Aorta (tissue), 5 donors: ENCODE measurements at regions of chr6 and their contacts with region 1.

Region 1: DNA sequence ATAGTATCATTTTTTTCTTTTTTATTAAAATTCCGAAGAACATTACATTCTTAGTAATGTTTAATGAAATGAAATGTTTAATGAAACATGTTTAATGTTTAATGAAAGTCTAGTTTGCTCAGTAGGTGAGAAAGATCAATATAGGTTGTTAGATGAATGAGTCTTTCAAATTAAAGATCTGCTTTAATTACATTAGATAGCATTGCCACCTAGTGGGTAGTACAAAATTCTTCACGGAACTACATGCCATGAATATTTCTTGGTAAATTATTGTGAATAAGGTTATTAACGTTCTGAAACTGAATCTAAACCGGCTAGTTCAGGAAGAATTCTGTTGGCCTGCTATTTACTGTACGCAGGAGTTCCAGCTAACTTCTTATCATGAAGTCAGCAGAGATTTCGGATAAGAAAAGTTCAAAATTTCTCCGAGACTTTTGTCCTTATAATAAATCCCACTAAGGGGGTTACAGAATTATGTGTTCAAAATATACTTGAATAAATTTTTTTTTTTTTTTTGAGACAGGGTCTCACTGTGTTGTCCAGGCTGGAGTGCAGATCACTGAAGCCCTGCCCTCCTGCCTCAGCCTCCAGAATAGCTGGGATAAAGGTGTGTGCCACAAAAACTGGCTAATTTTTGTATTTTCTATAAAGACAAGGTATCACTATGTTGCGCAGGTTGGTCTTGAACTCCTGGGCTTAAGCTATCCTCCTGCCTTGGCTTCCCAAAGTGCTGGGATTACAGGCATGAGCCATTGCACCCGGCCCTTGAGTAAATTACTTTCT is 7.9 kb upstream of the GMNN start:
- DNase-seq: no peak
- ATAC-seq: no peak
- H3K4me3 ChIP-seq: no peak overlapping the region
- H3K27ac ChIP-seq: no peak overlapping the region
- H3K4me1 ChIP-seq: no peaks in the 10 kb centered on the region
- H3K27me3 ChIP-seq: no peaks in the 10 kb centered on the region

Region 2: DNA sequence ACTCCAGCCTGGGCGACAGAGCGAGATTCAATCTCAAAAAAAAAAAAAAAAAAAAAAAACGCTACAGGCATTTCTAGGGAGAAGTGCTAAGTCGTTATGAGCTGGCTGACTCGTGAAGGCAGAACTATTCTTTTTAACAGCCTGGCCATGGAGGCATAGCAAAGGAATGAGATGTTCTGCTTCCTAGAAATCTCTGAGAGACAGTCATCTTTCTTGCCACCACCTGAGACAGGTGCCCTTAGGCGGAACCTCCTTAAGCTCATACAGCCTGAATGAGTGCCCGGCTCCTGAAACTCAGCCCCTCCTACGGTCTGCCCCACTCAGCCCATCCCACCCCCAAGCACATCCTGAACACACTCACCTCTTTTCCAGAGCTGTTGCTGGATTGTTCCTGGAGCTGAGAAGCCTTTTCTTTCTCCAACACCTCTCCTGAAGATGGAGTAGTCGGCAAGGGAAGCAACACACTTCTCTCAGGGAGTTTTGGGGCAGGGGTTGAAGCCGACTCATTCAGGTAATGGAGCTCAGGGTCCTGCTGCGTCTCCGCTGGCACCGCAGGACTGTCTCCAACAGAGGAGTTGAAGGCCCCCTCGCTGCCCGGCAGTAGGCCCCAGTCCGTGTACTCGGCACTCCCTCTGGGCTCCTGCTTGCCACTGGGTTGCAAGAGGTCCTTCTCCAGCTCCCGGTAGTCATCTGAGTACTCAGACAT is 171.2 kb before region 1 on chr6:
- intact Hi-C with region 1: no loop called
- DNase-seq: no peak
- ATAC-seq: no peak
- H3K4me3 ChIP-seq: no peak overlapping the region
- H3K27ac ChIP-seq: no peak overlapping the region
- H3K4me1 ChIP-seq: no peaks in the 10 kb centered on the region
- H3K27me3 ChIP-seq: no peaks in the 10 kb centered on the region

Region 3: GRCh38 chr6:24666641-24667377 is 100.1 kb before region 1 on chr6 and contains the starts of genes ACOT13 and TDP2:
- intact Hi-C with region 1: loop called in 1 of 2 experiments (anchors 10 kb)
- DNase-seq: peak; percentile 98
- ATAC-seq: peak; percentile 100
- H3K4me3 ChIP-seq: peak within 1 kb of the TSS; percentile 73 to 85
- H3K27ac ChIP-seq: peak within 1 kb of the TSS; percentile 52 to 69
- H3K4me1 ChIP-seq: peaks cover 0 to 4% of the 10 kb centered on the region in 2 donors
- H3K27me3 ChIP-seq: no peaks in the 10 kb centered on the region
- total RNA-seq, gene ACOT13: 8.9 to 10.4 TPM
- total RNA-seq, gene TDP2: 30.7 to 35.7 TPM